Esophagus squamous epithelium (tissue), 5 donors: ENCODE measurements at regions of chr3 and their contacts with region 1.

Region 1: GRCh38 chr3:73070675-73071575 is 9.5 kb downstream of the EBLN2 start:
- DNase-seq: no peak
- H3K4me3 ChIP-seq: no peak overlapping the region
- H3K27ac ChIP-seq: no peak overlapping the region
- H3K4me1 ChIP-seq: no peaks in the 10 kb centered on the region
- H3K27me3 ChIP-seq: no peaks in the 10 kb centered on the region
- CTCF ChIP-seq: no peak
- POLR2A ChIP-seq: no peak

Region 2: DNA sequence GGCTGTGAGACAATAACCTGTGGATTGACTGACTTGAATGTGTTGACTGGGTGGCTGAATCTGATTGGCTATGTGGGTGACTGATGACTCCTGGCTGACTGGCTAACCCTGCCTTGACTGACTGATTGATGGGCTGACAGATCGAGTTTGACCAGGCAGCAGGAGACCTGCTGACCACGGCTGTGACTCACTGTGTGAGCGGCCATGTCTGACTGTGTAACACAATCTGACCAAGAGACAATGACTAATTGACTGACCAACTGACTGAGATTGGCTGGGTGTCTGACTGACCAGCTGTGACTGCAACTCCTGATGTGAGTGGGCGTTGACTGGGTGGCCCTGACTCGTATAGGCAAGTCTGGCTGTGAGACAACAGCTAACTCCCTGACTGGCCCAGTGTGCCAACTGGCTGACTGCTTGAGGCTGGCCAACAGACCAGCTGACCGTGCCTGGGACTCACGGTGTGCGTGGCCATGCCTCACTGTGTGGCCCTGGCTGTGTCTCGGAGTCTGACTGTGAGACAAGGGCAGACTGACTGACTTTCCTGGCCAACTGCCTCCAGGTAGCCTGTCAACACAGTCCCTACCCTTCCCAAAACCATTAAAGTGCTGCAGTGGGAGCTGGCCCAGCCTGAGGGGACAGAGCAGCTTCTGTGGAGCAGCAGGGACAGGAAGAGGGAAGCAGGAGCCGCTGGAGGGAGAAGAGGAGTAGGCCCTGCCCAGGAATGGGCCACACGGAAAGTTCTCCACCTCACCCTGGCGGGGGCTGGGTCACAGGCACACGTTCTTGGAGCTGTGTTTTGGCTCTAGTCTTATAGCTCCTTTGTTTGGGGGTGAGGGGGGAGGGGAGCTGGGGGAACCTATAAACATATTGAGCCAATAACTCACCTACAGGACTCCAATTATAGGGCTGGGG is 731.6 kb before region 1 on chr3:
- intact Hi-C with region 1: no loop called
- DNase-seq: no peak
- H3K4me3 ChIP-seq: no peak overlapping the region
- H3K27ac ChIP-seq: peak overlapping the region; percentile 51 to 81 (median 74)
- H3K4me1 ChIP-seq: peaks cover 16 to 48% (median 20%) of the 10 kb centered on the region in 3 donors
- H3K27me3 ChIP-seq: no peaks in the 10 kb centered on the region
- CTCF ChIP-seq: no peak
- POLR2A ChIP-seq: no peak

Region 3: DNA sequence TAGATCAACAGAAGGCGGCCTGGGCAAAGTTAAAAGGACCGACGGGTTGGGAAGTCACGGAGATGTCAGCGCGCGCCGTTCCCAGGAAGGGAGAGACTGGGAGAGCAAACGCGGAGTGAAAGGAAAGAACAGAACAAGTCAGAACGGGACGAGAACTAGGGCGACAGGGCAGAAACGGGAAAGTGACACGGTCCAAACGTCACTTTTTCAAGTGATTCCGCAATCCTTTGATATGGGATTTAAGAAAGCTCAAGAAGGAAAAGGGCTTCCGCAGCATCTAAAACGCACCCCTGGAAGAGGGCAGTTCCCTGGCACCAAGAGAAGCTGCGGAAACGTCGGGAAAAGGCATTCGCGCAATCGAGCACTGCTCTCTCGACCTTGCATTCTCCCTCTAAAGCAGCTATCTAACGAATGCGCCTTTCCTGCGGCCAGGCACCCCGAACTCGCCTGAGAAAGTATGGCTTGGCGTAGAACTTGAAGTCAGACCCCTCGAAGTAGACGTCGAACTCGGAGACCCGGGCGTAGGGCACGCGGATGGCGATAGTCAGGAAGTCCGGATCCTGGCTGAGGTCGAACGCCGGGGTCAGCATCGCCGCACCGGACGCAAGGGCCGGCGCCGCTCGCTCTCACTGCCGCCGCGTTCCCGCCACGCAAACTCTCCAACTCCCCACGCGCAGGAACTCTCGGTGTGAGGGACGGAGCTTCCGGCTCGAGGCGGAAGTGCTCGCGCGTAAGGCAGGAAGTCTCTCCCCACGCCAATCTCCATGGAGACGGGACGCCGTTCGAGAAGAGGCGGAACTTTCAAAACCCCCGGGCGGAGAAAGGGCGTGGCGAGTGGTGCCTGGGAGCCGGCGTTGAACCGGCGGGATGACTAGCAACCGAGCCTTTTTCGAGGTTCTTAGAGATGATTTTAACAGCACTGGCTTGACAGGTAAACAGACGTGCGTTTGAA is 222.9 kb before region 1 on chr3 and contains the start of gene SHQ1:
- intact Hi-C with region 1: loop called (anchors 10 kb)
- DNase-seq: peak; percentile 77
- H3K4me3 ChIP-seq: peak within 1 kb of the TSS; percentile 64 to 81 (median 77)
- H3K27ac ChIP-seq: peak within 1 kb of the TSS; percentile 73 to 87 (median 81)
- H3K4me1 ChIP-seq: peaks cover 12 to 35% (median 16%) of the 10 kb centered on the region in 3 donors
- H3K27me3 ChIP-seq: no peaks in the 10 kb centered on the region
- CTCF ChIP-seq: no peak
- POLR2A ChIP-seq: peak in 1 of 4 donors; percentile 52
- total RNA-seq, gene SHQ1: 6.7 to 13.4 (median 12.5) TPM